Activated B cell treated with CpG ODN at 0.5 μM for 24 hours (primary cell): ENCODE measurements at regions of chr6 and their contacts with region 1.

Region 1: GRCh38 chr6:15319677-15320076 is 73.8 kb downstream of the JARID2 start:
- DNase-seq: no peak
- ATAC-seq: peak; percentile 40
- H3K4me3 Mint-ChIP-seq: no peak overlapping the region
- H3K27ac Mint-ChIP-seq: peak overlapping the region; percentile 71
- H3K4me1 Mint-ChIP-seq: peaks cover 93% of the 10 kb centered on the region
- H3K27me3 Mint-ChIP-seq: no peaks in the 10 kb centered on the region
- CTCF ChIP-seq: no peak

Region 2: GRCh38 chr6:14932485-14933155 is 387.1 kb before region 1 on chr6:
- CTCF ChIA-PET with region 1: no interaction called
- POLR2A ChIA-PET with region 1: no interaction called
- intact Hi-C with region 1: no loop called
- DNase-seq: no peak
- ATAC-seq: no peak
- H3K4me3 Mint-ChIP-seq: no peak overlapping the region
- H3K27ac Mint-ChIP-seq: no peak overlapping the region
- H3K4me1 Mint-ChIP-seq: peaks cover 11% of the 10 kb centered on the region
- H3K27me3 Mint-ChIP-seq: no peaks in the 10 kb centered on the region
- CTCF ChIP-seq: no peak

Region 3: DNA sequence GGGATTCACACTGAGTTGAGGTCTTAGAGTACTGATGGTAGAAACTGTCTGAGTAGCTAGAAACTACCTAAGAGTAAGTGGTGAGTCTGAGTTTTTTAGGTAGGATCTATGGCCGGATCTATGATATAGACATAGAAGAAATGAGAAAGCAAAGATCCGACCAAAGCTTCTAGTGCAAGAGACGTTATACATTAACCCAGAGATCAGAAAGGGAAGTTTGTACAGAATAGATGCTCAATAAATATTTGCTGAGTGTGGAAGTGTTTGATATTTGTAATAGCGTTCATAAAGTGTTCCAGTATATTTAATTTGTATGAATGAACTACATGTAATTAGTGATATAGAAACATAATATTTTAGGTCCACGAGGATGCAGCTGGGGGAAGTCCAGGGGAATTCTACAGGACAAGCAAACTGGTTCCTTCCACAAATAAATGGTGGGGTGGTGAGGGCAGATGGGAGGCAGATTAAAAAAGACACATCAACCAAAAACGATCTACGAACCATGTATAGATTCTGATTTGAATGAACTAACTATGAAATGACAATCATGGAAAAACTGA is 105.8 kb before region 1 on chr6:
- CTCF ChIA-PET with region 1: no interaction called
- POLR2A ChIA-PET with region 1: no interaction called
- intact Hi-C with region 1: no loop called
- DNase-seq: no peak
- ATAC-seq: no peak
- H3K4me3 Mint-ChIP-seq: no peak overlapping the region
- H3K27ac Mint-ChIP-seq: no peak overlapping the region
- H3K4me1 Mint-ChIP-seq: peaks cover 15% of the 10 kb centered on the region
- H3K27me3 Mint-ChIP-seq: no peaks in the 10 kb centered on the region
- CTCF ChIP-seq: no peak

Region 4: DNA sequence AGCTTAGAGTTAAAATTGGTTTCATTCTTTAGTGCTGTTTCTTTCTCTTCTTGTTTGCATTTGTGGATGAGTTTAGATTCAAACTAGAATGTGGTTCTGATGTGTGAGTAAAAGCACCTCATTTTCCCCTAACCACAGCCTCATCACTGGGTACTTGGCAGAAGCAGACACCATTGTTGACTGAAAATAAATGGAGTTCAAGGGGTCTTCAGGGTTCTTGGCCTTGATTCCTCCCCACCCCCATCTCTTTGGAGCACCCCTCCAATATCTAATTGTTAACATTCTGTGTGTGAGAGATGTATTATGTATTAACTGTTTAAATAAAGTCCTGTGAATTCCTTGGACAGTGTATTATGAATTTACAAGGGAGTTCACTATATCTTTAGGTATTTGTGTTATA is 14.2 kb before region 1 on chr6:
- CTCF ChIA-PET with region 1: no interaction called
- POLR2A ChIA-PET with region 1: interaction called, 12 read pairs
- intact Hi-C with region 1: loop called (anchors 1 kb)
- DNase-seq: no peak
- ATAC-seq: peak; percentile 75
- H3K4me3 Mint-ChIP-seq: peak overlapping the region; percentile 62
- H3K27ac Mint-ChIP-seq: peak overlapping the region; percentile 91
- H3K4me1 Mint-ChIP-seq: peaks cover 82% of the 10 kb centered on the region
- H3K27me3 Mint-ChIP-seq: no peaks in the 10 kb centered on the region
- CTCF ChIP-seq: no peak

Region 5: GRCh38 chr6:15451738-15452137 is 132.1 kb after region 1 on chr6:
- CTCF ChIA-PET with region 1: no interaction called
- POLR2A ChIA-PET with region 1: no interaction called
- intact Hi-C with region 1: no loop called
- DNase-seq: no peak
- ATAC-seq: peak; percentile 19
- H3K4me3 Mint-ChIP-seq: peak overlapping the region; percentile 49
- H3K27ac Mint-ChIP-seq: peak overlapping the region; percentile 85
- H3K4me1 Mint-ChIP-seq: peaks cover 78% of the 10 kb centered on the region
- H3K27me3 Mint-ChIP-seq: no peaks in the 10 kb centered on the region
- CTCF ChIP-seq: no peak

Region 6: GRCh38 chr6:16494793-16495192 is 1175.1 kb after region 1 on chr6:
- CTCF ChIA-PET with region 1: no interaction called
- POLR2A ChIA-PET with region 1: no interaction called
- intact Hi-C with region 1: no loop called
- DNase-seq: no peak
- ATAC-seq: peak; percentile 89
- H3K4me3 Mint-ChIP-seq: peak overlapping the region; percentile 17
- H3K27ac Mint-ChIP-seq: peak overlapping the region; percentile 60
- H3K4me1 Mint-ChIP-seq: peaks cover 39% of the 10 kb centered on the region
- H3K27me3 Mint-ChIP-seq: no peaks in the 10 kb centered on the region
- CTCF ChIP-seq: no peak